Heart right ventricle (tissue), 16 donors: ENCODE measurements at regions of chr1 and their contacts with region 1.

Region 1: DNA sequence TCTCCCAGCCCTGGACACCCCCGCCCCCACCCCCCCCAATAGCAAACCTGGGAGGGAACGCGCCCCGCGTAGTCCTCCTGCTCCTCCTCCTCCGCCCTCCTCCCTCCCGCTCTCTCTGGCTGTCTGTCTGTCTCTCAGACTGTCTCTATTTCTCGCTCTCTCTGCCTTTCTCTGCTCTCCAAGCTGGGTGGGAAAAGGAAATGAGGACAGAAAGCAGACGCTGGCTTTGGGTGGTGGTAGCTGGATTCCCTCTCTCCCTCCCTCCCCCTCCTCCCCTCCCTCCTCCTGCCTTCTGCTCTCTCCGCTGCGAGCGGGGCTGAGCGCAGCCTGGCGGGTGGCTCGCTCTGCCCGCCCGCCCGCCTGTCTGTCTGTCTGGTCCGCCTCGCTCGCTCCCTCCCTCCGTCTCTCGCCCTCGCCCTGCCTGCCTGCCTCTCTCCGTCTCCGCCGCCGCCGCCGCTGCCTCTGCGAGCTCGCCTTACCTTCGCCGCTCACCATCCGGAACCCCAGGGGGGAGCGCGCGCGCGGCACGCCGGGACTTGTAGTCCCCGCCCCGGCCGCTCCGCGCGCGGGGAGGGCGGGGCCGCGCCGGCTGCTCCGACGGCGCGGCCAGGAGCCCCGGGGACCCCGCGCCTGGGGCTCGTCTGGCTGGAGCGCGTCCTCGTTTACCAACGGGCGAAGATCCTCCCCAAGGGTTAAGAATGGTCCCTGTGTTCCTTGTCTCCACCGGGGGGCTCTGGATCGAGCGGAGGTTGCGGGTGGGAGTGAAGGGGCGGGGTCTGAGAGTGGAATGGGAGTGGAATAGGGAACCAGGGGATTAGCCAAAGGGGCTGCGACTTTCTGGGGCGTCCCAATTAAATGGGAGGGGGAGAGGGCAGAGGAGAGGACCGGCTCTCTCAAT is at the start of gene AHDC1:
- DNase-seq: peak; percentile 91 to 93
- ATAC-seq: peak; percentile 51 to 80 (median 69)
- H3K4me3 ChIP-seq: peak within 1 kb of the TSS; percentile 42 to 100 (median 93)
- H3K27ac ChIP-seq: peak within 1 kb of the TSS; percentile 89 to 100 (median 96)
- H3K4me1 ChIP-seq: peaks cover 26 to 77% (median 58%) of the 10 kb centered on the region in 9 donors
- H3K27me3 ChIP-seq: peaks cover 0 to 4% (median 0%) of the 10 kb centered on the region in 7 donors
- CTCF ChIP-seq: peak in 4 of 9 donors; percentile 14 to 37 (median 26)
- total RNA-seq, gene AHDC1: 32.2 to 53.1 (median 42.9) TPM

Region 2: DNA sequence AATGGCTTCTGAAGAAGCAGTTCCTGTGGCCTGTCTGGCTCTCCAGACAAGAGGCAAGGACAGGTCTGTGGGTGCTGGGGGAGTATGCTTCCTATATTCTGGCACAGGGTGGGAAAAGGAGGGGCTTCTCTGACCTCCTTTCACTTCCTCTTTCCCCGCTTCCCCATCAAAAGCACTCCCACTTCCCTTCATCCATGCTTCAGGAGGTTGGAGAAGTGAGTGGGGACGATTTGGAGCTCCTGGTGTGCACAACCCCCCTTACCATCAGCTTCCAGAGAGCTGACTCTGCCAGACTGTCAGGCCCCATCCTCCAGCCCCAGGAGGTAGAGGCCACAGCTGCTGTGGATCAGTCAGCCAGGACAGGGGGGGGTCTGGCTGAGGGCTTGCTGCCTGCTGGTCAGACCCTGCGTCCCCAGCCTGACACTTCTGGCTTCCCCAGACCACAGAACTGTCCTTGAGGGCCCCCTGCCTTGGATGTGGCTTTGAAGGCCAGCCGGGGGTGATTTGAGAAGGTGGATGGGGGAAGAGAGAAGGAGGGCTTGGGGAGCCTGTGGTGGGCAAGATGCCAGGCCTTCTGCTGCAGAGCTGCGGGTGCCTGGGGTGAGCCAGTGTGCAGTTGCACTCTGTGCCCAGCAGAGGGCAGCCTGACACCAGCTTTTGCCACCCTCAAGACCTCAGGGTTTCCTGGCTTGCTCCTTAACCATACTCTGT is 303.4 kb before region 1 on chr1:
- intact Hi-C with region 1: loop called in 9 of 10 experiments (anchors 1 to 10 kb)
- DNase-seq: peak; percentile 78 to 84
- ATAC-seq: peak; percentile 79 to 93 (median 88)
- H3K4me3 ChIP-seq: no peak overlapping the region
- H3K27ac ChIP-seq: peak overlapping the region; percentile 65 to 88 (median 82)
- H3K4me1 ChIP-seq: peaks cover 11 to 47% (median 30%) of the 10 kb centered on the region in 9 donors
- H3K27me3 ChIP-seq: no peaks in the 10 kb centered on the region
- CTCF ChIP-seq: peak; percentile 95 to 99 (median 99)

Region 3: GRCh38 chr1:27402349-27402754 is 201.6 kb before region 1 on chr1:
- intact Hi-C with region 1: loop called in 7 of 10 experiments (anchors 2 to 5 kb)
- DNase-seq: peak; percentile 73 to 79
- ATAC-seq: peak; percentile 24 to 53 (median 41)
- H3K4me3 ChIP-seq: no peak overlapping the region
- H3K27ac ChIP-seq: peak overlapping the region; percentile 68 to 91 (median 82)
- H3K4me1 ChIP-seq: peaks cover 41 to 100% (median 86%) of the 10 kb centered on the region in 9 donors
- H3K27me3 ChIP-seq: no peaks in the 10 kb centered on the region
- CTCF ChIP-seq: peak; percentile 25 to 68 (median 58)

Region 4: DNA sequence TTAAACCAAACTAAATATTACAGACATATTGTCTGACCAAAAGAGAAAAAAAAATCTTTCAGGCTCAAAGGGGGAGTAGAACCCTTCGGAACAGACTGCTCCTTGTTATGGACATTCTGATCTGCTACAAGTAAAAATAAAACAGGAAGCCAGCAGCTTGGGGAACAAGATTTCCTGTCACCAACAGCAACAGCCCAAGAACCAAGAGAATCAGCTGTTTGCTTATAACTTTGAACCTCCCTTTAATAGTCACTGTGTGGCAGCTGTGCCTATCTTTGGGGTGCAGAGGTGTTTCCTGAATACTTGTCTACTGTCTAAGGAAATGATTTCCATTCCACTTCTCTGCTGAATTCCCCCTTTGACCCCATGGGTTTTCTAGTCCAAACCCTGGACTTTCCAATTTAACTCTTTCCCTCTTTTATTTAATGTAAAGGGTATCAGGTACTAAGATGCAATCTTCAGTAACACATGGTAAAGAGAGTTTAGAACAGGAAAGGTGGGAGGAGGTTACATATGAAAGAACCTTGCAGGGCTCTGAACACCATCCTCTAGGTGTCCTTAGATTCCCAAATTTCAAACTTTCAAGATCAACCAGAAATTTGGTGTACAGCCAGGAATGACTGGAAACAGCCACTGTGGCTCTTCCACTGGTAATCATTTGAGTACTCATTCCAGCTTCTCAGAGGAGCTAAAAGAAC is 172.9 kb before region 1 on chr1:
- intact Hi-C with region 1: loop called in 1 of 10 experiments (anchors 5 kb)
- DNase-seq: peak in 1 of 2 donors; percentile 50
- ATAC-seq: peak; percentile 13 to 76 (median 38)
- H3K4me3 ChIP-seq: peak overlapping the region in 3 of 10 donors; percentile 8 to 30 (median 19)
- H3K27ac ChIP-seq: peak overlapping the region; percentile 78 to 88 (median 86)
- H3K4me1 ChIP-seq: peaks cover 31 to 100% (median 97%) of the 10 kb centered on the region in 9 donors
- H3K27me3 ChIP-seq: no peaks in the 10 kb centered on the region
- CTCF ChIP-seq: peak in 3 of 9 donors; percentile 37 to 46 (median 43)

Region 5: DNA sequence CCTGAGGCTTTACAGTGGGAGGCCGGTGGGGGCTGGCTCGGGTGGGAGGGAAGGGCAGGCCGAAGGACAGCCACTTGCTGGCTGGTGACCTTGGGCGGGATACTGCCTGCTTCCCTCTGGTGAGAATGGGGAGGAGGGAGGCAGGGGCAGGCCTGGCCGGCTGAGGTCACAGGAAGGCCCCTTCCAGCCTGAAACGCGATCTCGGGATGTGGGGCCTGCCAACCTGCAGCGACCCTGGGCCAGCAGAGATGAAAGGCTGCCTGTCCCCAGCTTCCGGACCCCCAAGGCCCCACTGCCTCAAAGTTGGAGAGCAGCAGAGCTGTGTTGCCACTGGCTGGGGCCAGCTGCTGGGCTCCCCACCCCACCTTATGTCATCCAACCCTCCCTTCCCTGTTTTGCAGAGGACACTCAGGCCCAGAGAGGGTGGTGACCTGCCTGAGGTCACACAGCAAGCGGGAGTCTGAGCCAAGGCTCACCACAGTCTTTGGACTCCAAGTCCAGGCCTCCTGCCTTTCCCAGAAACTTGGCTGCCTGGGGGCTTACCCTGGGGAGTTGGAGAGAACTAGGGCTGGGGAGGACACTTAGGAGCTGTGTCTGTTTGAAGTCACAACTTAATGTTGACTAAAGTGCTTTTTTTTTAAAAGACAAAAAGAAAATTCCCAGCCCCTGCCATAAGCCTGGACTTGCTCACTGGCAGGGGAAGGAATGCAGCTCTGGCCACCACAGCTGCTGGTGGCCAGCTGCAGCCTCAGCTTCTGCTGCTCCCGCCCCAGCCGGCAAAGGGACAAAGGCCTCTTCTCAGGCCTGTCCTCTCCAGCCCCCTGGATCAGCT is 99.1 kb before region 1 on chr1:
- intact Hi-C with region 1: loop called in 3 of 10 experiments (anchors 5 to 10 kb)
- DNase-seq: peak; percentile 90 to 93
- ATAC-seq: peak; percentile 93 to 96 (median 94)
- H3K4me3 ChIP-seq: peak overlapping the region in 4 of 10 donors; percentile 31 to 43 (median 38)
- H3K27ac ChIP-seq: peak overlapping the region; percentile 88 to 99 (median 97)
- H3K4me1 ChIP-seq: peaks cover 20 to 44% (median 30%) of the 10 kb centered on the region in 9 donors
- H3K27me3 ChIP-seq: no peaks in the 10 kb centered on the region
- CTCF ChIP-seq: peak in 1 of 9 donors; percentile 6

Region 6: DNA sequence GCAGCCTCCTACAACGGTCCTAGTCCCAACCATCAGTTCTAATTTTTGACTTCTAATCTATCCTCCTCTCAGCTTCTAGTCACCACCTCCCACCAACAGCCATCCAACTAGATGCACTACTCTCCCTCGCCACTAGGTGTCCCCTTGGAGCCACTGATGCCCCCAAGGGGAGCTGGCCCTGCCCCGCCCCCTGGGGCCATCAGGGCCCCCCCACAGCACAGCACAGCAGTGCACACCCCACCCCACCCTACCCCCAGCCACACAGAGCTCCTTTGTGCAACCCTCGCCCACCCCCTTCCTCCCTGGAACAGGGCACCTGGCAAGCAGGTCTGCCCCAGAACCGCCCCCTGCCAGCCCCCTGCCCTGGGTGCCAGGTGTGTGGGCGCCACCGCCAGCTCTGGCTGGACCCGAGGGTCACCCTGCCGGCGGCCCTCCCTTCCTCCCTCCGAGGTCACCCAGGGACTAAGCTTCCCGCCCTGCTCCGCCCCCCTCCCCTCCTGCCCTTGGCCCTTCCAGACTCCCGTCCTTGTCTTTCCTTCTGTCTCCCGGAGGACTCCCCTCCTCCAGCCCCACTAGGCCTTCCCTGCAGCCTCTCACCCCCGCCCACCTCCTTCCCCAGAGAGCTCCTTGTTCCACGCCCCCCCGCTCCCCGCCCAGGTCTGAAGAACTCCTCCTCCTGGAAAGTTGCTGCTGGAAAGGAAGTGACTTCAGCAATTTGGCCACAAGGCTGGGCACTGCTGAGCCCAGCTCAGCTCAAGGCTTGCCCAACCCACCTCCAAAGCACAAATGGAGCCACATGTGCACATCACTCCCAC is 46.9 kb before region 1 on chr1:
- intact Hi-C with region 1: loop called in 9 of 10 experiments (anchors 1 to 5 kb)
- DNase-seq: peak; percentile 93 to 96
- ATAC-seq: peak; percentile 65 to 78 (median 72)
- H3K4me3 ChIP-seq: peak overlapping the region in 8 of 10 donors; percentile 10 to 32 (median 22)
- H3K27ac ChIP-seq: peak overlapping the region; percentile 74 to 96 (median 86)
- H3K4me1 ChIP-seq: peaks cover 43 to 84% (median 69%) of the 10 kb centered on the region in 9 donors
- H3K27me3 ChIP-seq: no peaks in the 10 kb centered on the region
- CTCF ChIP-seq: peak; percentile 92 to 98 (median 96)

Region 7: DNA sequence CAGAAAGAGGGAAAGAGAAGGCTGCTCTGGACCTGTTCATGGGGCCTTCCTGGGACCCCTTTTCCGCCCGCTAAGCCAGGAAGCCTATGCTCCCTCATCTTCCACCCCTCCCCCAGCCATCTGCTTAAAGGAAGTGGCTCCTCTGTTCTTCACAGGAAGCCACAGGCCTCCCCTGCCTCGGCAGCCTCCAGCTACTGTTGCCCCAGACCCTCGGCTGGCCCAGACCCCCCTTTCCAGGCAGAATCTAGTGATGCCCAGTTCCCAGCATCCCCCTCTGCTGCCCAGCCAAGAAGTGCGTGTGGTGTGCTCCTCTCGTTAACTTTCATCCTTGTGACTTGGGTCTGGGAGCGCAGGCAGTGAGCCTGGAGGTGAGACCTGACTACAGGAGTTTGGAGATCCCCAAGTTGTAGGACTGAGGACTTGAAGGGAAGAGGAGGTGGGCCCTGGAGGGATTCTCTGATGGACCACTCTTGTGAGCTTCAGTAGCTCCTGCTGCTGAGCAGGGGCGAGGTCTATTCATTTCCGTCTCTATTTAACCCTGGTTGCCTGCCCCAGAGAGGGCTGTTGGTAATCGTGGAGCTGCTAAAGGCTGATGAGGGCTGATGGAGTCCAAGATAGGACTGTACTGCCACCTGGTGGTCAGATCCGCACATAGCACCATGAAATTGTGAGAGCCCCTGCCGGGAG is 58.9 kb after region 1 on chr1:
- intact Hi-C with region 1: loop called in 9 of 10 experiments (anchors 1 to 2 kb)
- DNase-seq: peak; percentile 73 to 86
- ATAC-seq: peak; percentile 49 to 75 (median 68)
- H3K4me3 ChIP-seq: no peak overlapping the region
- H3K27ac ChIP-seq: peak overlapping the region in 9 of 10 donors; percentile 23 to 85 (median 76)
- H3K4me1 ChIP-seq: peaks cover 8 to 65% (median 38%) of the 10 kb centered on the region in 9 donors
- H3K27me3 ChIP-seq: no peaks in the 10 kb centered on the region
- CTCF ChIP-seq: peak; percentile 85 to 94 (median 91)